Calu3 (cell line): ENCODE measurements at regions of chr9 and their contacts with region 1.

Region 1: GRCh38 chr9:136339173-136339957 is 12.0 kb downstream of the GPSM1 start:
- DNase-seq: peak; percentile 82
- H3K4me3 Mint-ChIP-seq: no peak overlapping the region
- H3K27ac Mint-ChIP-seq: no peak overlapping the region
- H3K4me1 Mint-ChIP-seq: no peaks in the 10 kb centered on the region
- H3K27me3 Mint-ChIP-seq: no peaks in the 10 kb centered on the region
- CTCF ChIP-seq: peak; percentile 81

Region 2: GRCh38 chr9:136372561-136373299 is 33.4 kb after region 1 on chr9:
- CTCF ChIA-PET with region 1: no interaction called
- intact Hi-C with region 1: loop called (anchors 2 kb)
- DNase-seq: peak; percentile 81
- H3K4me3 Mint-ChIP-seq: peak overlapping the region; percentile 26
- H3K27ac Mint-ChIP-seq: peak overlapping the region; percentile 52
- H3K4me1 Mint-ChIP-seq: no peaks in the 10 kb centered on the region
- H3K27me3 Mint-ChIP-seq: no peaks in the 10 kb centered on the region
- CTCF ChIP-seq: no peak